ENCODE measurements at regions of chr9 and their contacts with region 1.

Region 1: DNA sequence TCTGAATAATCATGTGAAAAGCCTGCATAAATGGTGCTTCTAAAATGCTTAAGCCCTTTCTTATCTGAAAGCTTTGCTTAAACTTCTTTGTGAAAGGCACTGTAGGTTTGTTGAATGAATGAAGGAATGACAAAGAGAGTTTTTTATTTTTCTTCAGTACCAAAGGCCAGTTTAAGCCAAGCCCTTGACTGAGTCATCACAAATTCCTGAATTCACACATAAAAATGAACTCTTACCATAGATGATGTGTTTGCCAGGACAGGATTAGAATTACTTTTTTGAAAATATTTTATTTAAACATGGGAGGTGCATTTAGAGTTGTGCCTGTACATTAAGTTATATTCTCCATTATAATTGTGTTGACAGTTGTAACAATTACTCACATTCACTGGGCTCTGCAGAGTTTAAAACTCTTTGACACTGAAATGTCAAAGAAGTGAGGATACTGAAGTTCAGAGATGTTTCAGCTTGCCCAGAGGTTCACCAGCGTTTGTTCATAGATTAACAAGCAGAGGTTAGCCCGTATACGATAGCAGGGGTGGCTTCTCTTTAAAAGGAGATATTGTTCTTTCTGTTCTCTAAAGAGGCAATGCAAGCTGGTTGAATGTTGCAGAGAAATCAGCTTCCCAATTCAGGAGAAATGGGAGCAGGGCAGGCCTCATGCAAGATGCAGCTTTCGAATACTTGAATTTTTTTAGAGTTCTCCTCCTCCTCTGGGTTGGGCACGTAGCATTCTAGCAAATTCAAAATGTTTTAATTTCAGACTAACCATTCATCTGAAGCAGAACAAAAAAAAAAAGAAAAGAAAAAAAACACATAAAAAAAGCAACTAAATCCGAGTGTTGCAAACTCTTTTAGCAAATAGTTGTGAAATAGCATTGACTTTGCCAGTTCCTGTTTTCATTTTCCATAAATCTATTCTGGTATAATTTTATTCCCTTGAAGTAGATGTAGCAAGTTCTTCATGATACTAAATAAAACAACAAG is 358.7 kb upstream of the KLF4 start:
- DNase-seq: no peak
- ATAC-seq: peak; percentile 33
- H3K4me3 ChIP-seq: no peak overlapping the region
- H3K27ac ChIP-seq: peak overlapping the region in 1 of 2 donors; percentile 58
- H3K4me1 ChIP-seq: peaks cover 0 to 2% of the 10 kb centered on the region in 2 donors
- H3K27me3 ChIP-seq: no peaks in the 10 kb centered on the region

Region 2: GRCh38 chr9:107749787-107750444 is 98.4 kb before region 1 on chr9:
- intact Hi-C with region 1: loop called in 1 of 2 experiments (anchors 5 kb)
- DNase-seq: peak; percentile 93 to 95
- ATAC-seq: peak; percentile 94
- H3K4me3 ChIP-seq: no peak overlapping the region
- H3K27ac ChIP-seq: peak overlapping the region; percentile 96 to 98
- H3K4me1 ChIP-seq: peaks cover 4 to 8% of the 10 kb centered on the region in 2 donors
- H3K27me3 ChIP-seq: no peaks in the 10 kb centered on the region

Measured in aorta (tissue), 5 donors.